ENCODE measurements at regions of chr6 and their contacts with region 1.

Region 1: DNA sequence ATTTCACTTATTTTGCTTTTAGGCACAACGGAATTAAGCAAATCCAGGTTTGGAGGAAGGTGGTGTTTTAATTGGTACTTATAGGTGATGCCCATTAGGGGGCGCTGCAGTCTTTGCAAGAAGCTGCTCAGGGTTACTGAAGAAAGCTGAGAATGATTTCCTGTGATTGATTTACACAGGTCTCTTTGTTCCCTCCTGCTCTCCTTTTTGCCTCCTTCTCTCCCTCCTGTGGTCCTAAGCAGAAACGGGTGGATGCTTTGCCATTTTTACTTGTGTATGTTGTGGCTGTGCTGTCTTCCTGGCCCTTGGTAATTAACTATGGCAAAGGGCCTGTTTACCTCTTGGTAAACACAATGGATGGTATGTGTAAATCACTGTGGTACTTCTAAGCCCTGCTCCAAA is 97.8 kb downstream of the ANKS1A start:
- DNase-seq: peak; percentile 72 to 91
- H3K4me3 ChIP-seq: no peak overlapping the region
- H3K27ac ChIP-seq: peak overlapping the region in 1 of 5 donors; percentile 43
- H3K4me1 ChIP-seq: peaks cover 0 to 14% (median 6%) of the 10 kb centered on the region in 4 donors
- H3K27me3 ChIP-seq: no peaks in the 10 kb centered on the region
- CTCF ChIP-seq: peak in 5 of 7 experiments; percentile 55 to 88 (median 81)
- EP300 ChIP-seq: no peak
- POLR2A ChIP-seq: no peak

Region 2: DNA sequence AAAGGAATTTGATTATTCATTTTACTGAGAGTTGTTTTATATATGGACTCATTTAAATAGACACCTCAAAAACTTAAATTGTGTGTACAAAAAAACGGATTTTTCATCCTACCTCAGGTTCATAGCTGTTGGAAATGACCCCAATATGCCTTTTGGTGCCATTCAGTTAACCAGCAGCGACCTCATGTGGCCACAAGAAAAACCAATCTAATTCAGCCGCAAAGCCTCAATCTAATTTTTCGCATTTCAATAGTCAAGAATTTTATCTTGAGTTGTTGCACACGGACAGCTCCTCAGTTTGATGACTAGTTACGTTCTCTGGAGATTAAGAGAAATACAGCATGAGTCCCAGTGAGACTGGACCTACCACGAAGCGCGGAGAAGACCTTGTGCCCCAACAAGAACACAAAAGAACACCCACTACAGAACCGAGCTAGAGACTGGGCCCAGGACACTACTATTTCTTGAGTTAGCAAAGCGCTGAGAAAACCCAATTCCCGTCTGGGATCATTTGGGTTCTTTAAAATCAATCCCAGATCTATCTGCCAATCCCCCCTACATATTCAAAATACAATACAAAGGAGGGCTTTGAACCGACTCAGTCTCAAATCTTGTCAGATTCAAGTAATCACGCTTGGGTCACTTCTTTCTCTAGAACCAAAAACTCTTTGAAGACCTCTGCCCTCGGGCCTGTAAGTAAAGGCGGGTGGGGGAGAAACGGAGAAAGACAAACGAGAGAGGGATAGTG is 153.2 kb after region 1 on chr6:
- intact Hi-C with region 1: loop called (anchors 2 kb)
- DNase-seq: peak; percentile 35 to 91
- H3K4me3 ChIP-seq: no peak overlapping the region
- H3K27ac ChIP-seq: no peak overlapping the region
- H3K4me1 ChIP-seq: peaks cover 9 to 25% (median 20%) of the 10 kb centered on the region in 4 donors
- H3K27me3 ChIP-seq: peaks cover 0 to 13% (median 8%) of the 10 kb centered on the region in 3 donors
- CTCF ChIP-seq: peak in 5 of 7 experiments; percentile 49 to 81 (median 73)
- EP300 ChIP-seq: no peak
- POLR2A ChIP-seq: no peak

Region 3: DNA sequence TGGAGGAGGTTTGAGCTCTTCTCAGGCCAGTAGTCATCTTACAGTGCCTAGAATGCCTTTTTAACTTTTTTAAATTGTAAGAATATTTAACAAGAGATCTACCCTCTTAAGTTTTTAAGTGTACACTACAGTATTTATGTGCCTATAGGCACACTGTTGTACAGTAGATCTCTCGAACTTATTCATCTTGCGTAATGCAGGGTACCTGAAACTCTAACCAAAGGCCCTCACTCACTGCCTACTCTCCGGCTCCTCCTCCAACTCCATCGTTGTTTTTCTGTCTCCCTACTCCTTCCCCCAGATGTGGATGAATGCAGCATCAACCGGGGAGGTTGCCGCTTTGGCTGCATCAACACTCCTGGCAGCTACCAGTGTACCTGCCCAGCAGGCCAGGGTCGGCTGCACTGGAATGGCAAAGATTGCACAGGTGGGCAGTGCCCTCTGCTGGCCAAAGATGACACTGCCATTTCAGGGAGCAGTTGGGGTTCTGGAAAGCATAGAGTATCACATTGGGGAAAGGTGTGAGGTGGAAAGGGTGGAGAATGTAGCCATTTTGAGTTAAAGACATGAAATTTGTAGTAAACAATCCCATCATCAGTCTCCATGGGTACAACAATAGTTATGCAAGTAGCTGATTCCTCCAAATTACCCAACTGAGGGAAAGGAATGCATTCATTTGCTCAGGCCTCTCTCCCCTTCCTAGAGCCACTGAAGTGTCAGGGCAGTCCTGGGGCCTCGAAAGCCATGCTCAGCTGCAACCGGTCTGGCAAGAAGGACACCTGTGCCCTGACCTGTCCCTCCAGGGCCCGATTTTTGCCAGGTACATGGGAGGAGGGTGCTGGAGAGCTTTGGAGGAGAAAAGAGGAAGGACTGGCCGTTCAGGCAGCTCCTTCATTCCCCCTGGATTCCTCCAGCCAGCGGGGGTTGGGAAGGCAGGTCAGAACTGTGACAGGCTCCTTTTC is 254.3 kb after region 1 on chr6:
- intact Hi-C with region 1: loop called (anchors 10 kb)
- DNase-seq: peak; percentile 82 to 90
- H3K4me3 ChIP-seq: no peak overlapping the region
- H3K27ac ChIP-seq: no peak overlapping the region
- H3K4me1 ChIP-seq: peaks cover 0 to 35% (median 15%) of the 10 kb centered on the region in 4 donors
- H3K27me3 ChIP-seq: no peaks in the 10 kb centered on the region
- CTCF ChIP-seq: peak in 5 of 7 experiments; percentile 92 to 96 (median 93)
- EP300 ChIP-seq: no peak
- POLR2A ChIP-seq: no peak